Psoas muscle (tissue), 8 donors: ENCODE measurements at regions of chr15 and their contacts with region 1.

Region 1: GRCh38 chr15:42385206-42385979 is 26.1 kb downstream of the CAPN3 start:
- DNase-seq: no peak
- ATAC-seq: peak; percentile 73 to 82 (median 78)
- H3K4me3 ChIP-seq: peak overlapping the region; percentile 17
- H3K27ac ChIP-seq: peak overlapping the region; percentile 96
- H3K4me1 ChIP-seq: peaks cover 46% of the 10 kb centered on the region
- H3K27me3 ChIP-seq: no peaks in the 10 kb centered on the region
- CTCF ChIP-seq: peak; percentile 66

Region 2: GRCh38 chr15:42171122-42171521 is 214.3 kb before region 1 on chr15:
- intact Hi-C with region 1: no loop called
- DNase-seq: no peak
- ATAC-seq: peak in 1 of 4 donors; percentile 27
- H3K4me3 ChIP-seq: no peak overlapping the region
- H3K27ac ChIP-seq: no peak overlapping the region
- H3K4me1 ChIP-seq: no peaks in the 10 kb centered on the region
- H3K27me3 ChIP-seq: no peaks in the 10 kb centered on the region
- CTCF ChIP-seq: no peak

Region 3: DNA sequence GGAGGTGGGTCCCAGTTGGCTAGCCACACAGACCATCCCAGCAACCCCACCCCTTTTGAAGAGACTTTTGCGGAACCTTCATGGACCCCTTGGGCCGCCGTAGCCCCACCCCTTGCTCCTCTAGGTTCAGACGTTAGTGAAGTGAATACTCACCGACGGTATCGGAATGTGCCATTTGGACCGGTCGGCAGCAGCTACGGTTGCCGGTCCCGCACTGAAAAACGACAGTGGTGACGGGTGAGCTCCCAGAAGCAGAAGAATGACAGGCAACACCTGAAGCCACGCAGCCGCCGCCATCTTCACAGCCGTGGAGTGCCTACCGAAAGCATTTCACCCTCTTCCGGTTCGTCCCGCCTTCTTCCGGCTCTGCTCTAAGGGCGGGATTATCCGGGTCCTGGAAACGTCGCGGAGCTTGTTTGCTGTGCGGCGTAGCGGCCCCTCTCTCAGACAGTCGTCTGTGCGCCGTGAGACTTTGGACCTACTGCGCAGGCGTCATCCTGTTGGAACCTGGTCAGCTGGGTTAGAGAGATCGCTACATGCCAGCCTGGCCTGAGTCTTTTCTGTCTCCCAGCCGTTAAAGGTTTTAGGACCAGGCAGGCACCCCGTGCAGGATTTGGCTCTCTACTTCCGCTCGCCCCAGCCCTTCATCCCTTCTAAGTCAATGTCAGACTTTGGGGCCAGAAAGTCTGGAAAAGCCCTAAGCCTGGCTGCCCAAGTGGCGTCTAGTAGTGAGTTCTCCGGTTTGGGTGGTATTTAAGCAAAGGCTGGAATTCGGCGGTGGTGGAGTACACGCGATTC is 112.1 kb before region 1 on chr15 and contains the starts of genes GANC and TMEM87A:
- intact Hi-C with region 1: loop called (anchors 1 to 5 kb)
- DNase-seq: peak; percentile 97 to 98
- ATAC-seq: peak; percentile 93 to 97 (median 94)
- H3K4me3 ChIP-seq: peak within 1 kb of the TSS; percentile 73
- H3K27ac ChIP-seq: peak within 1 kb of the TSS; percentile 97
- H3K4me1 ChIP-seq: peaks cover 40% of the 10 kb centered on the region
- H3K27me3 ChIP-seq: no peaks in the 10 kb centered on the region
- CTCF ChIP-seq: no peak
- total RNA-seq, gene GANC: 20.3 to 37.7 (median 24.2) TPM
- total RNA-seq, gene TMEM87A: 17.6 to 30.4 (median 26.2) TPM

Region 4: GRCh38 chr15:42324308-42324707 is 61.1 kb before region 1 on chr15:
- intact Hi-C with region 1: loop called in 1 of 2 experiments (anchors 5 kb)
- DNase-seq: no peak
- ATAC-seq: peak; percentile 78 to 93 (median 86)
- H3K4me3 ChIP-seq: no peak overlapping the region
- H3K27ac ChIP-seq: peak overlapping the region; percentile 77
- H3K4me1 ChIP-seq: peaks cover 14% of the 10 kb centered on the region
- H3K27me3 ChIP-seq: no peaks in the 10 kb centered on the region
- CTCF ChIP-seq: no peak

Region 5: GRCh38 chr15:42360535-42361112 is 24.8 kb before region 1 on chr15:
- intact Hi-C with region 1: loop called in 1 of 2 experiments (anchors 1 kb)
- DNase-seq: no peak
- ATAC-seq: peak in 3 of 4 donors; percentile 31 to 66 (median 61)
- H3K4me3 ChIP-seq: peak overlapping the region; percentile 76
- H3K27ac ChIP-seq: peak overlapping the region; percentile 97
- H3K4me1 ChIP-seq: peaks cover 65% of the 10 kb centered on the region
- H3K27me3 ChIP-seq: no peaks in the 10 kb centered on the region
- CTCF ChIP-seq: no peak

Region 6: GRCh38 chr15:42427429-42428223 is 42.2 kb after region 1 on chr15:
- intact Hi-C with region 1: loop called in 1 of 2 experiments (anchors 2 kb)
- DNase-seq: no peak
- ATAC-seq: peak; percentile 82 to 92 (median 88)
- H3K4me3 ChIP-seq: no peak overlapping the region
- H3K27ac ChIP-seq: peak overlapping the region; percentile 86
- H3K4me1 ChIP-seq: peaks cover 48% of the 10 kb centered on the region
- H3K27me3 ChIP-seq: no peaks in the 10 kb centered on the region
- CTCF ChIP-seq: no peak

Region 7: GRCh38 chr15:42457445-42458442 is 72.4 kb after region 1 on chr15:
- intact Hi-C with region 1: loop called in 1 of 2 experiments (anchors 5 kb)
- DNase-seq: peak; percentile 65 to 79
- ATAC-seq: peak; percentile 89 to 90 (median 90)
- H3K4me3 ChIP-seq: peak overlapping the region; percentile 61
- H3K27ac ChIP-seq: peak overlapping the region; percentile 90
- H3K4me1 ChIP-seq: peaks cover 39% of the 10 kb centered on the region
- H3K27me3 ChIP-seq: no peaks in the 10 kb centered on the region
- CTCF ChIP-seq: no peak